Activated naive CD4-positive, alpha-beta T cell treated with anti-CD3 and anti-CD28 coated beads for 36 hours (primary cell): ENCODE measurements at regions of chr7 and their contacts with region 1.

Region 1: DNA sequence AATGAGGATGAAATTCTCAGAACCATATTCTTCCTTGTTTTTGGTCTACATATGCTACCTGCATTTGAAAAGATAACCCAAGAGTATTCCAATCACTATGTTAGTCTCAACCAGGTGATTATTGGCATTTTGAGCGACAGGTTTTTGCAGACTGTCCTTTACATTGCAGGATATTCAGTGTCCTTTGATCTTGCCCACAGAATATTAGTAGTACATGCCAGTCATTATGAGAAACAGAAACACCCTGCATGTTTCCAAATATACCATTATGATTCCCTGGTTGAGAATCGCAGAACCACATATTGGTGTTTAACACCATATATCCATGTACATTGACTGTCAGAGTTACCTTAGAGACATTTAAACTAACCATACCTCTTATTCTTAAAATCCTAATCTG is 30.6 kb downstream of the TMEM243 start:
- DNase-seq: no peak
- H3K4me3 Mint-ChIP-seq: no peak overlapping the region
- H3K27ac Mint-ChIP-seq: peak overlapping the region; percentile 2
- H3K4me1 Mint-ChIP-seq: peaks cover 27% of the 10 kb centered on the region
- H3K27me3 Mint-ChIP-seq: no peaks in the 10 kb centered on the region

Region 2: GRCh38 chr7:87173471-87173870 is 15.5 kb before region 1 on chr7:
- CTCF ChIA-PET with region 1: interaction called, 12 read pairs
- intact Hi-C with region 1: loop called (anchors 2 kb)
- DNase-seq: no peak
- H3K4me3 Mint-ChIP-seq: no peak overlapping the region
- H3K27ac Mint-ChIP-seq: peak overlapping the region; percentile 39
- H3K4me1 Mint-ChIP-seq: peaks cover 24% of the 10 kb centered on the region
- H3K27me3 Mint-ChIP-seq: no peaks in the 10 kb centered on the region